Panc1 (cell line): ENCODE measurements at regions of chr11 and their contacts with region 1.

Region 1: DNA sequence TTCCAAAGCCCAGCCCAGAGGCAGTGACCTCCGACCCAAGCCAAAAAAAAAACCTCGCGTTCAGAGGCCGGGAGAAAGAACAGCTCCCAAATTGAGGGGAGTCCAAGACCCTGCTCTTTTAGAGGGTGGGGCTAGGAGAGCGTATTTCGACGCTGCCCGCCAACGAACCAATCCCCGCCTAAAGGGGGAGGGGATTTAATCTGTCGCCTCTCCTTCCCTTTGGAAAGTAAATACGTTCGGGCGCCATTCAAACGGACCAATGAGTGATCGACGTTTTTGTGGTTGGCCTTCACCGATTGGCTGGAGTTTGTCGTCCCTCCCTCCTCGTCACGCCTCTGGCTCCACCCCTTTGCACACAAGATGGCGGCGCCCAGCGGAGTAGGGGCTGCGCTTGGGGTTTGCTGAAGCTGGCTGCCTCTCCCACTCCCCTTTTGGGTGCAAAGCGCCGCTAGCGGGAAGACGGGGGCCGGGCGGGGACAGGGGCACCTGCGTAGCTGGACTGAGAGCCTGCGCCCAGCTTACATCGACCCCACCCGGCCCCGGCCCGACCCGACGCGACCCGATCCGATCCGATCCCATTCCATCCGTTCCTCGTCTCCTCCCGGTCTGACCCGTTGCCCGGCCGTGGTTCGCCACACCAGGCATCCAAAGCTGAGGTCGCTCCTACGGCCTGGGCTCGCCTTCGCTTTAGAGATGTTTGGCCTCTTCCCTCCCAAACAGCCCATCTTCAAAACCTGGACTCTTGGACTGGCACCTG is at the start of gene RNF26:
- DNase-seq: peak; percentile 94
- ATAC-seq: peak; percentile 85
- H3K4me3 ChIP-seq: peak within 1 kb of the TSS; percentile 84 to 95
- H3K27ac ChIP-seq: peak within 1 kb of the TSS; percentile 98
- H3K4me1 ChIP-seq: peaks cover 40% of the 10 kb centered on the region
- H3K27me3 ChIP-seq: no peaks in the 10 kb centered on the region
- CTCF ChIP-seq: no peak
- total RNA-seq, gene RNF26: 69.0 TPM

Region 2: DNA sequence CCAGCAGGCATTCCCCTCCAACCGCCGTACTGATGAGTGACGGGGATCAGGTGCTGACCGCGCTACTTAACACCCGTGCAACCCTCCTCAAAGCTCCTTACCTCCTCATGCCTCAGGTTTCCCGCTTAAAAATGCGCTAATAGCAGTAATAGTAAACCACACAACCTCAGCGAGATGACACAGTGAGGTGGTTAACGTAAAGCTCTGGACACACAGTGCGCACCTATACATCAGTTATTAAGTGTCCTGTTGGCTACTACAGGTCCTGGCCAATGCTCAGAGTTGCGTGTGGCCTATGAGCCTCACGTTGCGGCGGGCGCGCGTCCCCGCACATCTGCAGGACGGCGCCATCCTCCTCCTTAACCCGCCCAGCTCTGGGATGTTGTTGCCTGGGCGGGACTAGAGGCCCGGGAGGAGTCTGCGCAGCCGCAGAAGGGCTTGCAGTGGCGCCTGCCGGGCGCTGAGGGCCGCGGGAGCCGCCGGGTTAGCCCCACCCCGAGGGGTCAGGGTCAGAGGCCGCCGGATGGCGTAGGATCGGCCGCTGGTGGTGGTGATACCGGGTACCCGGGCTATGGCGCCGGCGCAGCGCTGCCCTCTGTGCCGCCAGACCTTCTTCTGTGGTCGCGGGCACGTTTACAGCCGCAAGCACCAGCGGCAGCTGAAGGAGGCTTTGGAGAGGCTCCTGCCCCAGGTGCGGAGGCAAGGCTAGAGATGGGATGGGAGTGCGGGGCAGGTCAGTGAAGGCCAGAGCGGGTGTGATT is 336.5 kb before region 1 on chr11 and contains the start of gene CENATAC:
- CTCF ChIA-PET with region 1: interaction called, 25 read pairs
- POLR2A ChIA-PET with region 1: no interaction called
- in situ Hi-C with region 1: no loop called
- intact Hi-C with region 1: no loop called
- DNase-seq: no peak
- ATAC-seq: peak; percentile 99
- H3K4me3 ChIP-seq: peak within 1 kb of the TSS; percentile 75 to 91
- H3K27ac ChIP-seq: peak within 1 kb of the TSS; percentile 83
- H3K4me1 ChIP-seq: peaks cover 16% of the 10 kb centered on the region
- H3K27me3 ChIP-seq: no peaks in the 10 kb centered on the region
- CTCF ChIP-seq: no peak
- total RNA-seq, gene CENATAC: 45.4 TPM

Region 3: GRCh38 chr11:119055901-119056300 is 278.5 kb before region 1 on chr11:
- CTCF ChIA-PET with region 1: interaction called, 16 read pairs
- POLR2A ChIA-PET with region 1: no interaction called
- in situ Hi-C with region 1: no loop called
- intact Hi-C with region 1: no loop called
- DNase-seq: no peak
- ATAC-seq: no peak
- H3K4me3 ChIP-seq: peak overlapping the region; percentile 82 to 87
- H3K27ac ChIP-seq: peak overlapping the region; percentile 86
- H3K4me1 ChIP-seq: peaks cover 7% of the 10 kb centered on the region; the same call in 1 of the 2 replicates
- H3K27me3 ChIP-seq: no peaks in the 10 kb centered on the region
- CTCF ChIP-seq: no peak

Region 4: DNA sequence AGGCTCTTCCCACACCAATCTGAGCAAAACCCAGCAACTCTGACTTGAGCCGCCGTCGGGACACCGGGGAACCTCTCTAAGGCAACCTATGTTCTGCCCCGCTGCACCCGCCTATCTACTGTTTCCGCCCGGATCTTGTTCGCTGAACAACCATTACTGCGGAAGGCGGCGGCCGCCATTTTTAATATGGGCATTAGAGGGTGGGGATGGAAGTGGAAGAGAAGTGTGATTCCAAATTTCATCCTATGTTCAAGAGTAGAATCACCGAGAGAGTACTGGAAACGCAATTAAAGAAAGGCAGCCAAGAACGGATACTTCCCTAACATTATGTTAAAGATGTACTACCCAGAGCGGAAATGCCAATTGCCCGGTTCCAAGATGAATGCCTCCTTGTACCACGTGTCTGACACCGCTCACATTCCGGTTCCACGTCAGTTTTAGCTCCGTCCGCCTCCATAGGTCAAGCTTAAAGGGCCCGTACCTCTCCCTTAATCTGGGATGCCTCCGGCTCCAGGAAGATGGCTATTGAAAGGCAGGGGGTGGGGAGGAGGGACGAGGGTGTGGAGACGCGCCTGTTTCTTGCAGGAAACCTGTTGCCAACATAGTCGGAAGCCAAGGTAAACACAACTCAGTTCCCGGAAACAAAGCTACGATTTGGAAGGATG is 232.5 kb before region 1 on chr11 and contains the start of gene DPAGT1:
- CTCF ChIA-PET with region 1: interaction called, 16 read pairs
- POLR2A ChIA-PET with region 1: no interaction called
- in situ Hi-C with region 1: no loop called
- intact Hi-C with region 1: no loop called
- DNase-seq: peak; percentile 94
- ATAC-seq: peak; percentile 92
- H3K4me3 ChIP-seq: peak within 1 kb of the TSS; percentile 87 to 90
- H3K27ac ChIP-seq: peak within 1 kb of the TSS; percentile 99
- H3K4me1 ChIP-seq: peaks cover 21% of the 10 kb centered on the region
- H3K27me3 ChIP-seq: no peaks in the 10 kb centered on the region
- CTCF ChIP-seq: no peak
- total RNA-seq, gene DPAGT1: 72.1 TPM

Region 5: DNA sequence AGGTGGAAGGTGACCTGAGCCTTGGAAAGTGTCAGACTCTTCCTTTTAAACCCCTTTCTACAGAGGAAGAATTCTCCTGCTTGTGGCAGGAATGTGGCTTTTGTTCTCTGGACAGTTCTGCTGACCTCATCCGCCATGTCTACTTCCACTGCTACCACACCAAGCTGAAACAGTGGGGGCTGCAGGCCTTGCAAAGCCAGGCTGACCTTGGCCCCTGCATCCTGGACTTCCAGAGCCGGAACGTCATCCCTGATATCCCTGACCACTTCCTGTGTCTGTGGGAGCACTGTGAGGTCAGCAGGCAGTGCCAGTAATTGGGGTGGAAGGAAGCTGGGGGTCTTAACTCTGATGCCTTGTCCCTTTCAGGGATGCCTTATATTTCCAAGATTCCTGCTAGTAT is 203.7 kb before region 1 on chr11:
- CTCF ChIA-PET with region 1: no interaction called
- POLR2A ChIA-PET with region 1: no interaction called
- in situ Hi-C with region 1: no loop called
- intact Hi-C with region 1: no loop called
- DNase-seq: no peak
- ATAC-seq: no peak
- H3K4me3 ChIP-seq: no peak overlapping the region
- H3K27ac ChIP-seq: no peak overlapping the region
- H3K4me1 ChIP-seq: no peaks in the 10 kb centered on the region
- H3K27me3 ChIP-seq: no peaks in the 10 kb centered on the region
- CTCF ChIP-seq: no peak

Region 6: GRCh38 chr11:119236490-119236889 is 97.9 kb before region 1 on chr11:
- CTCF ChIA-PET with region 1: no interaction called
- POLR2A ChIA-PET with region 1: no interaction called
- in situ Hi-C with region 1: no loop called
- intact Hi-C with region 1: no loop called
- DNase-seq: no peak
- ATAC-seq: no peak
- H3K4me3 ChIP-seq: no peak overlapping the region
- H3K27ac ChIP-seq: no peak overlapping the region
- H3K4me1 ChIP-seq: no peaks in the 10 kb centered on the region
- H3K27me3 ChIP-seq: no peaks in the 10 kb centered on the region
- CTCF ChIP-seq: no peak

Region 7: DNA sequence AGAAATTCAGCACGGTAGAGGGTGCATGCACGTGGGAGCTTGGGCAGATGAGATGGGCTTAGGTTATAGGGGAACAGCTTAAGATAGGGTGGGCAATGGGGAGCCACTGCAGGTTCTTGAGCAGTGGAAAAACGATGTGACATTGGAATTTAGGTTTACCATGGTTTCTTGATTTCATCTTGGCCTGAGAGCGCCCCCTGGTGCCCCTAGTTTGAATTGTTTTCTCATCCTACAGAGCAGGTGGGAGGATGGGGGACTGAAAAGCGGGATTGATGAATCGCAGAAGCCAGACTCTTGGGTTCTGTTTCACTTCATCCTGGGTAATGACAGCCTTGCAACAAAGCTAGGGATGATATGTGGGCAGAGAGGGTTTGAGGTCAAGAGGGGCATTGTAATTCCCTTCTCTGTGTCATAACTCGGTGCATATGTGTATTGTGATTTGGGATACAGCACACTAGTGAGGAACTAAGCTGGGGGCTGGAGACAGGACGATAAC is 10.8 kb before region 1 on chr11:
- CTCF ChIA-PET with region 1: interaction called, 43 read pairs
- POLR2A ChIA-PET with region 1: interaction called, 4 read pairs
- in situ Hi-C with region 1: no loop called
- intact Hi-C with region 1: no loop called
- DNase-seq: peak; percentile 66
- ATAC-seq: no peak
- H3K4me3 ChIP-seq: no peak overlapping the region
- H3K27ac ChIP-seq: no peak overlapping the region
- H3K4me1 ChIP-seq: peaks cover 28% of the 10 kb centered on the region
- H3K27me3 ChIP-seq: no peaks in the 10 kb centered on the region
- CTCF ChIP-seq: peak; percentile 96

Region 8: GRCh38 chr11:119474682-119475596 is 140.6 kb after region 1 on chr11:
- CTCF ChIA-PET with region 1: interaction called, 18 read pairs
- POLR2A ChIA-PET with region 1: no interaction called
- in situ Hi-C with region 1: no loop called
- intact Hi-C with region 1: loop called (anchors 2 kb)
- DNase-seq: peak; percentile 58
- ATAC-seq: peak; percentile 85
- H3K4me3 ChIP-seq: no peak overlapping the region
- H3K27ac ChIP-seq: no peak overlapping the region
- H3K4me1 ChIP-seq: no peaks in the 10 kb centered on the region
- H3K27me3 ChIP-seq: no peaks in the 10 kb centered on the region
- CTCF ChIP-seq: peak; percentile 98

Region 9: DNA sequence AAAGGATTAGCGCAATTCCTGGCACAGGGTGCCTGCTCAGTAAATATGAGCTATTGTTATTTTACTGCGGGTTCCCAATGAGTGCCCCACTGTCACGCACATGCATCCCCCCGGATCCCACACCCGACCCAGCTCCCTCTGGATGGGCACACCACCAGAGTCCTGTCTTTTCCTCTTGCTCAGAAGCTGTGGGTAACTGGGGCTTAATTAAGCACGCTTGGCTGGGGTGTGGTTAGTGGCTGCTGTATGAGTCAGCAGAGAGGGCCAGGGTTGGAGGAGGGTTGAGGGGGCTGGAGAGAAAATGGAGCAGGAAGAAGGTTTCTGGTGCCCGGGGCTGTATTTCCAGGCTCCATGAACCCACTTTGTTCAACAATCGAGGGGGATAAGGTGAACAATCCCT is 425.0 kb after region 1 on chr11:
- CTCF ChIA-PET with region 1: no interaction called
- POLR2A ChIA-PET with region 1: no interaction called
- in situ Hi-C with region 1: no loop called
- intact Hi-C with region 1: no loop called
- DNase-seq: no peak
- ATAC-seq: no peak
- H3K4me3 ChIP-seq: no peak overlapping the region
- H3K27ac ChIP-seq: no peak overlapping the region
- H3K4me1 ChIP-seq: no peaks in the 10 kb centered on the region
- H3K27me3 ChIP-seq: peaks cover 18% of the 10 kb centered on the region
- CTCF ChIP-seq: no peak